ENCODE measurements at regions of chr12 and their contacts with region 1.

Region 1: GRCh38 chr12:51531978-51532497 is 59.0 kb upstream of the SCN8A start:
- DNase-seq: peak; percentile 71
- ATAC-seq: peak; percentile 78 to 91

Region 2: GRCh38 chr12:51424662-51425438 is 107.2 kb before region 1 on chr12 and contains the start of gene SLC4A8:
- intact Hi-C with region 1: loop called (anchors 2 to 5 kb)
- DNase-seq: peak; percentile 88
- ATAC-seq: peak; percentile 92 to 99
- total RNA-seq, gene SLC4A8: 0.29 to 0.71 TPM

Region 3: GRCh38 chr12:51809193-51809592 is 277.2 kb after region 1 on chr12:
- intact Hi-C with region 1: loop called in 1 of 2 experiments (anchors 10 kb)
- DNase-seq: no peak
- ATAC-seq: no peak

Measured in left cardiac atrium (tissue), 4 donors.